CD4-positive, alpha-beta T cell (primary cell): ENCODE measurements at regions of chr14 and their contacts with region 1.

Region 1: DNA sequence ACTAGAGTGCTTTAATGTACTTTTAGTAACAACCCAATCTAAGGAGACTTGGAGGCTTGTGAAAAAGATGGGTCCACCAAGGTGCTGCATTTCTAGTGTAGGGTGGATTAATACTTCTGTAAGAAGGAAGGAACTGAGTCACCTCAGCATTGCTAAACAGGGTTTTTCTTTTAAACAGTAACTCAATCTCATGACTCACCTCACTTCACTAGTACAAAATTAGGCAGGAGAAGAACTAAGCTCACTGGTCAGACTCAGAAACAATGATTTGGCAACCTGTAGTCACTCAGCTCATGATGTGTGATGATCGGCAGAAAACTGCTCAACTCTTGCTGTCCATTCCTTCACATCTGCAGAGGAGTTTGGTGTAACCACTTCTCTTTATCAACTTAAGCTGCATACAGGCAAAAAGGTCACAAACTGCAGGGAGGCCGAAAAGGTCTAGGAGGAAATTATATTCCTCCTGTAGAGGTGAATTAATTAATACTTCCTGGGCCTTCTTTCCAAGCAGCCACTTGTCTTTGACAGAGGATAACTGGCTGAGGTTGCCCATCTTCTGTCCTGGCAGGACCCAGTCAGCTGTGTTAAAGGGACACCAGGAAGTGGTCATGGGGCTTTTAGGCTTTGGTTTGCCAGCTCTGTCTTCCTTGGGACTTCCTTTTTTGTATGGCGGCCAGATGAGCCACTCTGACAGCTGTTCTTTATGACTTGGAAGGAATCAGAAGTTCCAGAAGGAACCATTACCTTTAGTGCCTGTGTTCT is 466.9 kb downstream of the FUT8 start:
- DNase-seq: no peak
- ATAC-seq: no peak
- H3K4me3 ChIP-seq: no peak overlapping the region
- H3K4me3 Mint-ChIP-seq: no peak overlapping the region
- H3K27ac ChIP-seq: no peak overlapping the region
- H3K27ac Mint-ChIP-seq: peak overlapping the region; percentile 8
- H3K4me1 ChIP-seq: peaks cover 17% of the 10 kb centered on the region
- H3K4me1 Mint-ChIP-seq: peaks cover 26% of the 10 kb centered on the region
- H3K27me3 ChIP-seq: no peaks in the 10 kb centered on the region
- H3K27me3 Mint-ChIP-seq: no peaks in the 10 kb centered on the region
- CTCF ChIP-seq: no peak

Region 2: DNA sequence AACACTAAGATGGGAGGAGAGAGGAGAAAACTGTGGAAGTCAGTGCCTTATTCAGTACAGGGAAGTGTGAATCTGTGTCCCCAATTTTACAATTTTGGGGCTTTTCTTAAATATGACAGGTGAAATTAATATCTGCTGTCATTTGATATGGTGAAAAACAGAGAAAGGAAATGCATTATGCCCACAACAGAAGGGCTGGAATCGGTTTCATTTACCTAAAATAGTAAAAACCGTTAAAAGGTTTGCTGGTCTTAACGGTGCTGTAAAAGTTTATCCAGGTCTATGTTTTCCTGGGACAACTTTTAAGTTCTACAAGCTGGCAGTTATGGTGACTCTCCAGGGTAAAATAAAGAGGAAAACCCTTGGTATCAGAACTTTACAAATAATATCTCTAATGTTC is 156.1 kb before region 1 on chr14:
- CTCF ChIA-PET with region 1: no interaction called
- POLR2A ChIA-PET with region 1: no interaction called
- intact Hi-C with region 1: no loop called
- DNase-seq: no peak
- ATAC-seq: no peak
- H3K4me3 ChIP-seq: no peak overlapping the region
- H3K4me3 Mint-ChIP-seq: no peak overlapping the region
- H3K27ac ChIP-seq: no peak overlapping the region
- H3K27ac Mint-ChIP-seq: no peak overlapping the region
- H3K4me1 ChIP-seq: peaks cover 9% of the 10 kb centered on the region
- H3K4me1 Mint-ChIP-seq: peaks cover 30% of the 10 kb centered on the region
- H3K27me3 ChIP-seq: no peaks in the 10 kb centered on the region
- H3K27me3 Mint-ChIP-seq: no peaks in the 10 kb centered on the region
- CTCF ChIP-seq: no peak

Region 3: DNA sequence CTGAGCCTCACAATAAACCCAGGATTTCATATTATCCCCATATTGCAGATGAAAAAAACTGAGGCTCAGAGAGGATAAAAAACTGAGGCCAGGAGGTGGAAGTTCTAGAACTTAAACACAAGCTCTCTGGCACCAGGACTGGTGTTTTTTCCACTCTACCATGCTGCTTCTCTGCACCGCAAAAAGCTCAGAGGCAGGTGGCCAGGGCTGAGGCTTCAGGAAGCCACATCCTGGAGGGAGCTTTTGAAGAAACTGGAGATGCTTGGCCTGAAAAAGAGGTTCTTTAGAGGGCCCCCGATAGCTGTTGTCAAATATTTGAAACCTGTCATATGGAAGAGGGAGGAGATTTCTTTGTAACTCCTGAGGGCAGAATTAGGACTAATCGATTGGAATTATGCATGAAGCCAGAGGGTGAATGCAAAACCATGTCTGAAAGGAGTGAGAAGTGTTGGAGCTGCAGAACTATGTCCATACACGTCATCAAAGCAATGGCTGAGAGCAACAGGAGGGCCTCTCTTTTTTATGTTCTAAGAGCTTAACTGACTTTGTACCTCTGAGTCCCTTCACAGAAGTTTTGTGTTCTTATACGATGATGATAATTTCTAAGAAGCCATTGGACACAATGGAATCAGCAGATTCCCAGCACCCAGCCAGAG is 18.3 kb before region 1 on chr14:
- CTCF ChIA-PET with region 1: no interaction called
- POLR2A ChIA-PET with region 1: interaction called, 12 read pairs
- intact Hi-C with region 1: no loop called
- DNase-seq: peak in 8 of 14 experiments; percentile 16 to 74 (median 31)
- ATAC-seq: peak; percentile 70
- H3K4me3 ChIP-seq: no peak overlapping the region
- H3K4me3 Mint-ChIP-seq: peak overlapping the region; percentile 40
- H3K27ac ChIP-seq: no peak overlapping the region
- H3K27ac Mint-ChIP-seq: peak overlapping the region; percentile 36
- H3K4me1 ChIP-seq: peaks cover 51% of the 10 kb centered on the region
- H3K4me1 Mint-ChIP-seq: peaks cover 66% of the 10 kb centered on the region
- H3K27me3 ChIP-seq: no peaks in the 10 kb centered on the region
- H3K27me3 Mint-ChIP-seq: no peaks in the 10 kb centered on the region
- CTCF ChIP-seq: no peak